Activated CD4-positive, alpha-beta T cell treated with anti-CD3 and anti-CD28 coated beads, Interleukin-2, amount 10 ng/mL, durations not matched to agents 7 days and 5 days (primary cell): ENCODE measurements at regions of chr22 and their contacts with region 1.

Region 1: DNA sequence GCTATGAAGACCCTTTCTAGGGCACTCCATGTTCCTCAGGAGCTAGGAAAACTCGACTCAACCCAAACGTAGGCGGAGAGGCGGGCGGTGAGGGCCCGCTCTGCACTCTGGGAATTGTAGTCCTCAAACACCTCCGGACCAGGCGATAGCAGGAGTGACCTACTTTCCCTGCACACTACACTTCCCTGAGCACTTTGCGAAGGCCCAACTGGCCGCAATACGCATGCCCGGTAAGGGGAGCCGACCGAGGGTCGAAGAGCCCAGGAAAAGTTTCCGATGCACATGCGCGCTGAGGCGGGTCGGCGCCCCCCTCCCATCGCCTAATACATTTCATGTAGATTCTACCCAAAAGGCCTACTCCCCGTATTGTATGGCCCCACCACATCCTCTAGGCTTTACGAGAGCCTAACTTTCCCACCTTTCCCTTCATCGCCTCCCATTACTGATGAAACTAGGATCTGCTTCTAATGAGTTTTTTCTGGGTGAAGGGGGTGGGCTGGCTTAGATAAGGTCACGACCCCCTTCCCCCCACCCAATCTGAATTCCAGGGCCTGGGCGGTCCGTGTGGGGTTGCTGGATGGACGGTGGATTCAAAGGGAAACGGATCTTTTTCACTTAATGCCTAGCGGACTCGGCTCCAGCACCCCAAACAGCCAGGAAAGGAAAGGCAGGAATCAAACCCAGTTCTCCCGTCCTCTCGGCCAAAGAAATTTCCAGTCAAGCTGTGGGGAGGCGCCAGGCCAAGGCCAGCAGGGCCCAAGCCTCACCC is 2.1 kb downstream of the TOB2 start:
- DNase-seq: peak; percentile 85
- H3K4me3 Mint-ChIP-seq: peak overlapping the region; percentile 82
- H3K27ac Mint-ChIP-seq: peak overlapping the region; percentile 96
- H3K4me1 Mint-ChIP-seq: peaks cover 27% of the 10 kb centered on the region
- H3K27me3 Mint-ChIP-seq: no peaks in the 10 kb centered on the region

Region 2: GRCh38 chr22:41468381-41469217 is 24.1 kb after region 1 on chr22 and contains the starts of genes ACO2 and PHF5A:
- CTCF ChIA-PET with region 1: interaction called, 9 read pairs
- POLR2A ChIA-PET with region 1: interaction called, 10 read pairs
- DNase-seq: peak; percentile 98
- H3K4me3 Mint-ChIP-seq: peak within 1 kb of the TSS; percentile 88
- H3K27ac Mint-ChIP-seq: peak within 1 kb of the TSS; percentile 99
- H3K4me1 Mint-ChIP-seq: peaks cover 46% of the 10 kb centered on the region
- H3K27me3 Mint-ChIP-seq: no peaks in the 10 kb centered on the region
- total RNA-seq, gene ACO2: 73.4 to 77.9 TPM
- total RNA-seq, gene PHF5A: 63.6 to 64.8 TPM

Region 3: GRCh38 chr22:41565403-41566054 is 121.0 kb after region 1 on chr22:
- CTCF ChIA-PET with region 1: no interaction called
- POLR2A ChIA-PET with region 1: no interaction called
- DNase-seq: peak; percentile 27
- H3K4me3 Mint-ChIP-seq: no peak overlapping the region
- H3K27ac Mint-ChIP-seq: no peak overlapping the region
- H3K4me1 Mint-ChIP-seq: peaks cover 6% of the 10 kb centered on the region
- H3K27me3 Mint-ChIP-seq: peaks cover 17% of the 10 kb centered on the region